GM10248 (cell line): ENCODE measurements at regions of chr9 and their contacts with region 1.

Region 1: GRCh38 chr9:136277746-136278145 is 26.1 kb downstream of the CCDC187 start:
- DNase-seq: no peak
- CTCF ChIP-seq: no peak

Region 2: GRCh38 chr9:136267261-136268111 is 10.3 kb before region 1 on chr9:
- CTCF ChIA-PET with region 1: interaction called, 26 read pairs
- POLR2A ChIA-PET with region 1: interaction called, 4 read pairs
- DNase-seq: peak; percentile 99
- CTCF ChIP-seq: peak; percentile 56

Region 3: DNA sequence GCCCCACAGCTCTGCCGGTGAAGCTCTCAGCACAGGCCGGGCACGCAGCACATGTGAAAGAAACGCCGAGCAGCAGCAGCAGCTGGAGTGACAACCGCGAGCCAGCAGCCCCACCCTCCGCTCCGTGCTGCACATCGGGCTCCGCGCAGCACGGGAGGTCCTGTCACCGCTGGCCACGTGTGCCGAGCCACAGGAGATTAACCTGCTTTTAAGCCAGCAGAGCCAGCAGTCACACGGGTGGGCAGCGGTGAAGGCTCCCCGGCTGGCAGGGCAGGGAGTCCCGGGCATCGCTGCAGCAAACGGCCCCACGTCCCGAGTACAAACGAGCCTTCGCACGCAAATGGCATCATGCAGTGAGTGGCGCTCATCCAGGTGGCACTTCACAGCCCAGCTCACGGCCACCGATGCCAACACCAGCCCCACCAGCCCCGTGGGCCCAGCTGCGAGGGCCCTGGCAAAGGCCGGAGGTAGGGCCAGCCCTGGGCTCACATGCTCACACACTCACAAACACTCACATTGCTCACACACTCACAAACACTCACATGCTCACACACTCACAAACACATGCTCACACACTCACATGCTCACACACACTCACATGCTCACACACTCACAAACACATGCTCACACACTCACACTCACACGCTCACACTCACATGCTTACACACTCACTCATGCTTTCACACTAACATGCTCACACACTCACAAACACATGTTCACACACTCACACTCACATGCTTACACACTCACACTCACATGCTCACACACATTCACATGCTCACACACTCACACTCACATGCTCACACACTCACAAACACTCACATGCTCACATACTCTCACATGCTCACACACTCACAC is 15.1 kb after region 1 on chr9:
- CTCF ChIA-PET with region 1: no interaction called
- POLR2A ChIA-PET with region 1: no interaction called
- DNase-seq: no peak
- CTCF ChIP-seq: no peak